ENCODE measurements at regions of chr11 and their contacts with region 1.

Region 1: DNA sequence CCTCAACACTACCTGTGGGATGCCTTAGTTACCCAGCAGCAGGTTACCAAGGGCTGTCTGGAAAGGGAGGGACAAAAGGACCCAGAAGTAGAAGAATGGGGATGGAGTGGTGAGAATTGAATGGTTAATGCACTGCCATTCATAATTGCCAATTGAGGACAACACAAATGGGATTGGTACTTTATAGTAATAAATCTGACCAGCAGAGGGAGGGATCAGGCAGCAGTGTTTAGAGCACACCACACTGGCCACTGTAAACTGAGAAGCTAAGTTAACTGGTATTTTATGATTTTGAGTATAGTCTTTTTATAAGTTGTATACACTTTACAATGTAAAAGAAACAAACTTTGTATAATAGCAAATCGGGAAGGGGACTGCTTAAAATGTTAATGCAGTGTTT is 10.7 kb downstream of the TBRG1 start:
- DNase-seq: no peak
- H3K4me3 ChIP-seq: no peak overlapping the region
- H3K27ac ChIP-seq: no peak overlapping the region
- H3K4me1 ChIP-seq: no peaks in the 10 kb centered on the region
- H3K27me3 ChIP-seq: no peaks in the 10 kb centered on the region
- CTCF ChIP-seq: peak; percentile 44; the same call in 1 of the 2 replicates

Region 2: GRCh38 chr11:124577716-124578427 is 55.5 kb before region 1 on chr11:
- CTCF ChIA-PET with region 1: no interaction called
- POLR2A ChIA-PET with region 1: no interaction called
- intact Hi-C with region 1: no loop called
- DNase-seq: no peak
- H3K4me3 ChIP-seq: no peak overlapping the region
- H3K27ac ChIP-seq: no peak overlapping the region
- H3K4me1 ChIP-seq: no peaks in the 10 kb centered on the region
- H3K27me3 ChIP-seq: peaks cover 40% of the 10 kb centered on the region
- CTCF ChIP-seq: no peak

Region 3: GRCh38 chr11:124673333-124674167 is 40.2 kb after region 1 on chr11 and contains the starts of genes SIAE and SPA17:
- CTCF ChIA-PET with region 1: no interaction called
- POLR2A ChIA-PET with region 1: no interaction called
- intact Hi-C with region 1: no loop called
- DNase-seq: peak; percentile 91 to 93
- H3K4me3 ChIP-seq: peak within 1 kb of the TSS; percentile 83
- H3K27ac ChIP-seq: peak within 1 kb of the TSS; percentile 50
- H3K4me1 ChIP-seq: peaks cover 18% of the 10 kb centered on the region
- H3K27me3 ChIP-seq: no peaks in the 10 kb centered on the region
- CTCF ChIP-seq: no peak
- total RNA-seq, gene SIAE: 29.2 and 37.9 TPM in 2 replicates
- total RNA-seq, gene SPA17: 6.1 and 15.7 TPM in 2 replicates

Region 4: DNA sequence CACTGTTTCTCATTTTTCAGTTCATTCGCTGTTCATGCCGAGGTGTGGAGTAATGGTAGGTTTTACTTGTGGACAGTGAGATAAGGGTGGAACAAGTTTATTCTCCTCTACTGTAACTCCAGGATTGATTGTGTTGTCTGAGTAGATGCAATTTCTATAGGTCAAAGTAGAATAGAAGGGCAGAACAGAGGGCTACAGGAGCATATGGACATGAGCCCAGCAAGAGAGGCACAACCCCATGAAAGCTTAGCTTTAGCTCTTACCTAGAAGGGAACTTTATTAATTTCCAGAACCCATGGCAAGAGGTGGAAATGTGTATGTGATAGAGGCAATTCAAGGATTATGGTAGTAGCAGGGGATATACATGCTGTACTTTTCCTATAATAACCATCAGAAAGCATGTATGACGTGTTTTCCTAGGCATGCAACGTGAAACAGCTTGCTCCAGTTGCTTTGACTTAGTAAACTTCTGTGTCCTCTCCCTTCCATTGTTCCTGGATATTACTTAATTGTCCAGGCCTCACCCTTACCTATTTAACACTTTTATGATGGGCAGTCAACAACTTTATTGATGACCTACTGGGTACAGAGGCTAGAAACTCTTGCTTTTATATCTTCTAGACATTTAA is 415.9 kb after region 1 on chr11:
- CTCF ChIA-PET with region 1: no interaction called
- POLR2A ChIA-PET with region 1: interaction called, 13 read pairs
- intact Hi-C with region 1: no loop called
- DNase-seq: no peak
- H3K4me3 ChIP-seq: no peak overlapping the region
- H3K27ac ChIP-seq: no peak overlapping the region
- H3K4me1 ChIP-seq: no peaks in the 10 kb centered on the region
- H3K27me3 ChIP-seq: no peaks in the 10 kb centered on the region
- CTCF ChIP-seq: no peak

Measured in PC-9 (cell line).